ENCODE measurements at regions of chr1 and their contacts with region 1.

Region 1: DNA sequence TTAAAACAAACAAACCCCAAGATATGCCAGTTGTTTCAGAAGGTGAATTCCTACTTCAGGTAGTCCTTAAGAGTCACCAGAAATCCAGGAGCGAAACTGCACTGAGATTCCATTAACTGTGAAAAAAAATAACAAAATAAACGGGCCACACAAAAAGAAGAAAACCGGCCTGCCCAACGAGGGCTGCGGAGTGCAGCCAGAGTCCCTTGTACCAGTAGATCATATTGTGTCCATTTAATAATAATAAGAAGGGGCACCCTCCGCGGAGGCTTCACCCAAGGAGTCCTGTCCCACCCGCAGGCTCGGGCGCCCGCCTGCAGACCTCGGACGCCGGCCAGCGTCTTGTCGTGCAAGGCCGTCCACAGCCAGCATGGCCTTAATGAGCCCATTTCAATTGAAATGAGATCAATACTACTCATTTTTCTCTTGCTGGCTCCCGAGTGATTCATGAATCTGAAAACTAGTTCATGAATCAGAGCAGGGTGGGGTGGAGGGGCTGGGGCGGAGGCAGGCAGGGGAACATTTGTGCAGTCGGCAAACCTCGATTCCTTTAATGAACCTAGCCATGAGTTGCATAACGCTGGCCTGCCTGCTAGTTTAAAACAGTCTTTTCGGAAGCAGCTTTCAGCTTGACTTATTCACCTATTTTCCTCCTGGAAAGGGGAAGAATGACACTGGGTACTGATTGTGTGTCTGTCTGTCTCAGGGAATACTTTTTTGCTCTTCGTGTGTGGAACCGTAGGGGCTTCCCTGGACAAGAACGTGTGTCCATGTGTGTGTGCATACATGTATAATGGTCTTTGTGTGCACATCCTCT is 113.1 kb upstream of the IRF2BP2 start:
- DNase-seq: peak; percentile 74
- ATAC-seq: peak; percentile 23

Region 2: DNA sequence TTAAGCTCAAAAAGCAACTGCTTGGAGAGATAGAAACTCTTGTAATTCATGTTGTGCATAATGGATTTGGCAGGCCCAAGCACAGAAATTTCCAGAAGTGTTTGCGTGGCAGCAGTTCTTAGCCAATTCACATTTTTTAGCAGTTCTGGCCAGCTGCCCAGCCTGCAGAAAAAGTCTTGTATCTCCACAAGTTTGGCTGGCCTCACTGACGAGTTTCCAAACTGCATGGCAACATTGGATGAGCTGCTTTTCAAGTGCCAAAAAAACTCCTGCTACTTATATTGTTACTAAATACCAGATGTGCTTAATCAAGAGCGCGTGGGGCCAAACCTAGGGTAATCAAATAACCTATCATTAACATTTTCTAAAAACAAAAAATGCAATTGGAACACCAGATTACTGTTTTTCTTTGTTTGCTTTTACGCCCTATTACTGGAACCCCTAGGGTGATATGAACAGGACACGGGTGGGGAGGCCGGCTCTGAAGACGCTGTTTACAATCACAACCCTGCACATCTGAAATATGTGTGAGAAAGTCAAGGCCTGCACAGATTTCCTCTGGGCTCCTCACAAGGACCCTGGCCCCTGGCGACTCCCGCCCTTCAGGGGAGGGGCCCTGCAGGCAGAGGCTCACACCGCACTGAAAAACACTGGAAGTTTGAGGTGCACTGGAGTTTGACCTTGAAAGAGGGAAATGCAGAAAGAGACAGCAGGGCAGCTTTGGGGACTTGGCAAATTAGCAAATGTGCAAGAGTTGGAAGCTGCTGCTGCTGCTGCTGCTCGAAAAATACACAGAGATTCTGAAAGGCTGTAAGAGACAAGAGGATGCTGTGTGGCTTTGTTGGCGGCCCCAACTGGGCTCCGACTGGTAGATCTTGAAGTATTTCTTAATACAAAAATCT is 188.9 kb before region 1 on chr1:
- intact Hi-C with region 1: loop called (anchors 10 kb)
- DNase-seq: peak; percentile 96
- ATAC-seq: peak; percentile 13

Region 3: GRCh38 chr1:234881893-234882771 is 159.0 kb after region 1 on chr1:
- intact Hi-C with region 1: loop called (anchors 10 kb)
- DNase-seq: no peak
- ATAC-seq: no peak

Region 4: DNA sequence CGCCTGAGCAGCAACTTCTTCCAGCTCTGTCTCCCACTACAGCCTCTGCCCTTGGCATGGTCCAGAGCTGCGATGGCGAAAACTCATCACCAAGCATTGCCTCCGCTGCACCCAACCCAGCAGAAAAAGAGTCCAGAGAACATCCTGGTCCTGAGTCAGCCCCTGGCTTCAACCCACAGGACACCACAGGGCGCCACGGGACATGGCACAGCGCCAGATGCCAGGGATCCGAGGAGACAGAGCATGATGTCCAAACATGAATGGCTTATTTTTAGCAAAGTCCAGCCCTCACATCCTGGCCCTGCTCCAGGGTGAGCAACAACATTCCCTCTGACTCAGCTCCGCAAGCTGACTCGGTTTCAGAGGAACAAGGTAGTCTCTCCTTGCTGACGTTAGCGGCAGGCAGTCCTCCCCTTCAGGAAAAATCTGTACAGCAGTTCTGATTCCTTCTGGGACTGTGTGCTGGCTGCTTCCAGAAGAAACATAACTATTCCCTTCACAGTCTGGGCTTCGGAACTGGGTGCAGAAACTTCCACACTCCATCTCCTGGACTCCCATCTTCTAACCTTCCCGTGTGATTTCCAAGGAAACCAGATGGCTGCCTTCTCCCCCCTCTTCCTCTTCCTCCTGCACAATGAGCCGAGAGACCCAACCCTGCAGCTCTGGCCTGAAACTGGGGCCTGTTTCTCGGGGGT is 274.2 kb after region 1 on chr1:
- intact Hi-C with region 1: loop called (anchors 5 kb)
- DNase-seq: peak; percentile 98
- ATAC-seq: peak; percentile 94